HepG2 (cell line): ENCODE measurements at regions of chr17 and their contacts with region 1.

Region 1: GRCh38 chr17:68512247-68512982 is at the start of gene PRKAR1A:
- DNase-seq: peak; percentile 92
- ATAC-seq: peak; percentile 88
- H3K4me3 ChIP-seq: peak within 1 kb of the TSS; percentile 91 to 95 (median 91)
- H3K27ac ChIP-seq: peak within 1 kb of the TSS; percentile 91
- H3K4me1 ChIP-seq: peaks cover 75% of the 10 kb centered on the region
- H3K27me3 ChIP-seq: no peaks in the 10 kb centered on the region; a peak in 1 of 5 replicates
- CTCF ChIP-seq: peak; percentile 4; the same call in 1 of the 2 replicates
- EP300 ChIP-seq: 0 out of 4 replicates have a peak, but pooled peaks of 1 of the 2 experiments have one; percentile 19
- POLR2A ChIP-seq: peak; percentile 82 to 86
- RAD21 ChIP-seq: peak; percentile 61; the same call in 1 of the 2 replicates
- total RNA-seq, gene PRKAR1A: 266 and 335 TPM in 2 replicates

Region 2: DNA sequence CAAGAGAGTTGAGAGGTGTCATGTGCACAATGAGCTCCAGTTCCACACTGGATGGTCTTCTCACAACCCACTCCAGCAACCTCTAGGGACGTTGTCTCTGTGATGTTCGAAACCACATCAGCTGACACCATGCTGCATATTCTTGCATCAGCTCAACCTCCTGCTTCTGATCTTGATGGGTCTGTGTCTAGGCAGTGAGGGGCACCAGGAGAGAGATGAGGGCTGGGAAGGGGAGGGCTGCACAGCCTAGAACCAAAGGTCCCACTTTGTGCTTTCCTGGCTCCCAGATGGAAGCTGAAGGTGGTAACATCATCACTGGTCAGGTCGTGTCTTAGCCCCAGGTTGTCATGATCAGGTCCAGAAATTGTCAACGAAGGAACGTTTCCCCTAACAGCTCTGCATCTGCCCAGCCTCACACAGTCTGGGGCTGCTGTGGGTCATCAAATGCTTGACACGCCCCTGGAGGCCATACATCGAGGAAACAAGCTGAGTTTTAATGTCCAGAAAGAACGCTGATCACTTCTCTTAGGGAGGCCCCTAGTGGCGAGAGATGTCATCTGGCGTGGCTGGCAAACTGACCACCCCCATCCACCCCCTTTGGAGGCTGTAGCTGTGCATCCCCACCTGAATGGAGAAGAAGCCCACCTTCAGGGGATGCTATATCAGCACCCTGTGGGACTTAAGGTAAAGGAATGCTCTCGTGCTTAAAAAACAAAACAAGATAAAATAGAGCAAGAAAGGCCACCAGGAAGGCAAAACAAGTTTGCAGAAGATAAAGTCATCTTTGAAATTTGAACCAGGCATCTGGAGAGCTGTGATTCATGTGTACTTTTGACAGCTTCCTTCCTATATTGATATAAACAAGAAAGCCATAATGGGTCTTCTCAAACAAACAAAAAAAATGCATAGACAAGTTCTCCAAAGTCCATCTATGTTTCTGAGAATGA is 113.5 kb before region 1 on chr17:
- CTCF ChIA-PET with region 1: no interaction called
- POLR2A ChIA-PET with region 1: no interaction called
- in situ Hi-C with region 1: no loop called
- intact Hi-C with region 1: no loop called
- DNase-seq: peak; percentile 91
- ATAC-seq: peak; percentile 97
- H3K4me3 ChIP-seq: no peak overlapping the region
- H3K27ac ChIP-seq: peak overlapping the region; percentile 8
- H3K4me1 ChIP-seq: peaks cover 57% of the 10 kb centered on the region
- H3K27me3 ChIP-seq: no peaks in the 10 kb centered on the region
- CTCF ChIP-seq: peak; percentile 99
- EP300 ChIP-seq: peak in 1 of 2 experiments; percentile 60; a peak in 2 of 4 replicates
- POLR2A ChIP-seq: no peak
- RAD21 ChIP-seq: peak; percentile 98

Region 3: GRCh38 chr17:68484458-68484857 is 28.0 kb before region 1 on chr17:
- CTCF ChIA-PET with region 1: no interaction called
- POLR2A ChIA-PET with region 1: interaction called, 25 read pairs
- in situ Hi-C with region 1: no loop called
- intact Hi-C with region 1: loop called (anchors 1 kb)
- DNase-seq: peak; percentile 70
- ATAC-seq: no peak
- H3K4me3 ChIP-seq: peak overlapping the region in 1 of 3 experiments; percentile 34; a peak in 1 of 6 replicates
- H3K27ac ChIP-seq: peak overlapping the region; percentile 80
- H3K4me1 ChIP-seq: peaks cover 76% of the 10 kb centered on the region
- H3K27me3 ChIP-seq: no peaks in the 10 kb centered on the region
- CTCF ChIP-seq: no peak
- EP300 ChIP-seq: no peak
- POLR2A ChIP-seq: no peak
- RAD21 ChIP-seq: no peak

Region 4: GRCh38 chr17:68489919-68490318 is 22.5 kb before region 1 on chr17:
- CTCF ChIA-PET with region 1: no interaction called
- POLR2A ChIA-PET with region 1: interaction called, 25 read pairs
- in situ Hi-C with region 1: no loop called
- intact Hi-C with region 1: loop called (anchors 1 kb)
- DNase-seq: no peak
- ATAC-seq: no peak
- H3K4me3 ChIP-seq: no peak overlapping the region
- H3K27ac ChIP-seq: no peak overlapping the region
- H3K4me1 ChIP-seq: peaks cover 44% of the 10 kb centered on the region
- H3K27me3 ChIP-seq: no peaks in the 10 kb centered on the region
- CTCF ChIP-seq: no peak
- EP300 ChIP-seq: no peak
- POLR2A ChIP-seq: no peak
- RAD21 ChIP-seq: no peak

Region 5: DNA sequence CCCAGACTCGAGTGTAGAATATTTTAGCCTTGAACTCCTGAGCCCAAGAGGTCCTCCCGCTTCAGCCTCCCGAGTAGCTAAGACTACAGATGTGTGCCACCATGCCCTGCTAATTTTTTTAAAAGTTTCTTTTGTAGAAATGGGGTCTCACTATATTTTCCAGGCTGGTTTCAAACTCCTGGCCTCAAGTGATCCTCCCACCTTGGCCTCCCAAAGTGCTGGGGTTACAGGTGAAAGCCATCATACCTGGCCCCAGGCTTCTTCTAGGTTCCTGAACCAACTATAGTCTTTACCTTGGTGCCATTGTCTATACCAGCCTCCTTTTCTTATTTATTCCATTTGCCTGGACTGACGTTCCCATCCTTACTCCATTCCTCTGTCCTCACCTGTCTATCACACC is 17.3 kb before region 1 on chr17:
- CTCF ChIA-PET with region 1: no interaction called
- POLR2A ChIA-PET with region 1: interaction called, 19 read pairs
- in situ Hi-C with region 1: no loop called
- intact Hi-C with region 1: no loop called
- DNase-seq: no peak
- ATAC-seq: 0 out of 3 replicates have a peak, but pooled peaks have one; percentile 18
- H3K4me3 ChIP-seq: no peak overlapping the region
- H3K27ac ChIP-seq: no peak overlapping the region
- H3K4me1 ChIP-seq: peaks cover 27% of the 10 kb centered on the region
- H3K27me3 ChIP-seq: no peaks in the 10 kb centered on the region; a peak in 2 of 5 replicates
- CTCF ChIP-seq: no peak
- EP300 ChIP-seq: no peak
- POLR2A ChIP-seq: no peak
- RAD21 ChIP-seq: no peak

Region 6: GRCh38 chr17:68576811-68577496 is 64.5 kb after region 1 on chr17:
- CTCF ChIA-PET with region 1: no interaction called
- POLR2A ChIA-PET with region 1: interaction called, 12 read pairs
- in situ Hi-C with region 1: no loop called
- intact Hi-C with region 1: no loop called
- DNase-seq: no peak
- ATAC-seq: peak; percentile 22
- H3K4me3 ChIP-seq: no peak overlapping the region
- H3K27ac ChIP-seq: no peak overlapping the region
- H3K4me1 ChIP-seq: peaks cover 30% of the 10 kb centered on the region
- H3K27me3 ChIP-seq: no peaks in the 10 kb centered on the region
- CTCF ChIP-seq: no peak
- EP300 ChIP-seq: no peak
- POLR2A ChIP-seq: no peak
- RAD21 ChIP-seq: no peak

Region 7: DNA sequence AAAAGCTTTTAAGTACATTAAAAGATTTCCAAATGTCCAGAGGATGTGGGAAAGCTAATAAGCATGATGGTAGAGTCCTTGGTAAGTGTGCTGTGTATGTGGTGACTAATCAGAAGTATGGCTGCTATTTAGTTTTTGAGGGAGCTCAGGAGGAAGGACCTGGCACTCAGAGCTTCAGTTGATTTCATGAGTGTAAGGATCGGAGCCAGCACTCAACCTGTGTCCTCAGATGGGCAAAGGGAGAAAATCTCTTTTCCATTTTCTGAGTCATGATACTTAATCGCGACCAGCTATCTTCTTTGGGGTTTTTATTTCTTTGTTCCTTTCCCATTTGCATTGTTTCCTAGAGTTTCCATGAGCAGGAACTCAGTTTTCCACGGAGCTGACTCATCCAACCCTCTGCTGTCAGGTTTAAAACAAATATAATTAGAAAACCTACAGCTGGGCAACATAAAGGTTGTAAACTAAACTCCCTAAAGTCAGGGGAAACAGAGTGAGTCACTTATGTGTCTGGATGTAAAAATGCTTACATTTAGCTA is 1027.4 kb after region 1 on chr17:
- CTCF ChIA-PET with region 1: no interaction called
- POLR2A ChIA-PET with region 1: no interaction called
- in situ Hi-C with region 1: no loop called
- intact Hi-C with region 1: no loop called
- DNase-seq: no peak
- ATAC-seq: no peak
- H3K4me3 ChIP-seq: no peak overlapping the region
- H3K27ac ChIP-seq: no peak overlapping the region
- H3K4me1 ChIP-seq: no peaks in the 10 kb centered on the region
- H3K27me3 ChIP-seq: no peaks in the 10 kb centered on the region
- CTCF ChIP-seq: no peak
- EP300 ChIP-seq: no peak
- POLR2A ChIP-seq: no peak
- RAD21 ChIP-seq: no peak